CD8-positive, alpha-beta memory T cell (primary cell): ENCODE measurements at regions of chr19 and their contacts with region 1.

Region 1: GRCh38 chr19:11380653-11381534 is 3.2 kb downstream of the EPOR start:
- DNase-seq: peak; percentile 93 to 99 (median 98)
- H3K4me3 ChIP-seq: peak overlapping the region; percentile 67
- H3K4me3 Mint-ChIP-seq: peak overlapping the region; percentile 84 to 98 (median 92)
- H3K27ac ChIP-seq: peak overlapping the region; percentile 89
- H3K27ac Mint-ChIP-seq: peak overlapping the region; percentile 95 to 100 (median 98)
- H3K4me1 ChIP-seq: peaks cover 52% of the 10 kb centered on the region
- H3K4me1 Mint-ChIP-seq: peaks cover 34 to 53% (median 46%) of the 10 kb centered on the region in 3 donors
- H3K27me3 ChIP-seq: peaks cover 5% of the 10 kb centered on the region
- H3K27me3 Mint-ChIP-seq: peaks cover 13 to 15% of the 10 kb centered on the region in 2 donors

Region 2: DNA sequence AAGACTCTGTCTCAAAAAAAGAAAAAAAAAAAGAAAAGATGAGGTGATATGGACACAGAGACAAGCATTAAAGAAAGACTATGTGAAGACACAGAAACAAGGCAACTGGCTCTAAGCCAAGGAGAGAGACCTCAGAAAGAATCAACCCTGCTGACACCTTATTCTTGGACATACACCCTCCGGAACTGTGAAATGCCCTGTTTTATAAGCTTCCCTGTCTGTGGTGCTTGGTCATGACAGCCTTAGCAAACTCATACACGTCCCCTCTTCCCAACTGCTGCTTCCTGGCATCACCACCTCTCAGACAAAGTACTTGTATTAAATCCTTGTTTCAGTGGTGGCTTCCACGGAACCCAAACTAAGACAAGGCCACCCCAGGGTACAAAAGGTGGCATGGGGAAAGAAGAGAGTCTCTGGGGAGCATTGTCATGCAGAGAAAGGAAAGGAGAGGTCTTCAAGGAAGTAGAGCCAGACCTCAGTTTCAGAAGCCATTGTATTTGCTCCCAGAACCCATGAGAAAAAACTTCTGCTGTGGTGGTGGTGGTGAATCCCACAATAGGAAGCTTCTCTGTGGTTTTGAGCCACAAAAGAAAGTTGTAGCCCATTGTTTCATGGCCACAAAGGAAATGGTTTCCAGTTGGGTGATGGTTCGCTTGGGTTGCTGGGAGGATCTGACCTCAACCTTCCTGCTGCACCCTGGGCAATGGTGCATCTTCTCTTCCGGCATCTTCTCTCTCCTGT is 101.2 kb before region 1 on chr19:
- CTCF ChIA-PET with region 1: no interaction called
- POLR2A ChIA-PET with region 1: no interaction called
- DNase-seq: peak in 4 of 5 donors; percentile 30 to 69 (median 60)
- H3K4me3 ChIP-seq: peak overlapping the region; percentile 6
- H3K4me3 Mint-ChIP-seq: peak overlapping the region in 6 of 7 donors; percentile 30 to 81 (median 70)
- H3K27ac ChIP-seq: no peak overlapping the region
- H3K27ac Mint-ChIP-seq: peak overlapping the region in 6 of 8 donors; percentile 9 to 94 (median 62)
- H3K4me1 ChIP-seq: peaks cover 17% of the 10 kb centered on the region
- H3K4me1 Mint-ChIP-seq: peaks cover 10 to 21% (median 18%) of the 10 kb centered on the region in 3 donors
- H3K27me3 ChIP-seq: peaks cover 10% of the 10 kb centered on the region
- H3K27me3 Mint-ChIP-seq: peaks cover 26 to 35% of the 10 kb centered on the region in 2 donors

Region 3: GRCh38 chr19:11306334-11306733 is 74.6 kb before region 1 on chr19:
- CTCF ChIA-PET with region 1: no interaction called
- POLR2A ChIA-PET with region 1: no interaction called
- DNase-seq: no peak
- H3K4me3 ChIP-seq: no peak overlapping the region
- H3K4me3 Mint-ChIP-seq: no peak overlapping the region
- H3K27ac ChIP-seq: no peak overlapping the region
- H3K27ac Mint-ChIP-seq: no peak overlapping the region
- H3K4me1 ChIP-seq: no peaks in the 10 kb centered on the region
- H3K4me1 Mint-ChIP-seq: no peaks in the 10 kb centered on the region
- H3K27me3 ChIP-seq: no peaks in the 10 kb centered on the region
- H3K27me3 Mint-ChIP-seq: peaks cover 7 to 20% of the 10 kb centered on the region in 2 donors

Region 4: DNA sequence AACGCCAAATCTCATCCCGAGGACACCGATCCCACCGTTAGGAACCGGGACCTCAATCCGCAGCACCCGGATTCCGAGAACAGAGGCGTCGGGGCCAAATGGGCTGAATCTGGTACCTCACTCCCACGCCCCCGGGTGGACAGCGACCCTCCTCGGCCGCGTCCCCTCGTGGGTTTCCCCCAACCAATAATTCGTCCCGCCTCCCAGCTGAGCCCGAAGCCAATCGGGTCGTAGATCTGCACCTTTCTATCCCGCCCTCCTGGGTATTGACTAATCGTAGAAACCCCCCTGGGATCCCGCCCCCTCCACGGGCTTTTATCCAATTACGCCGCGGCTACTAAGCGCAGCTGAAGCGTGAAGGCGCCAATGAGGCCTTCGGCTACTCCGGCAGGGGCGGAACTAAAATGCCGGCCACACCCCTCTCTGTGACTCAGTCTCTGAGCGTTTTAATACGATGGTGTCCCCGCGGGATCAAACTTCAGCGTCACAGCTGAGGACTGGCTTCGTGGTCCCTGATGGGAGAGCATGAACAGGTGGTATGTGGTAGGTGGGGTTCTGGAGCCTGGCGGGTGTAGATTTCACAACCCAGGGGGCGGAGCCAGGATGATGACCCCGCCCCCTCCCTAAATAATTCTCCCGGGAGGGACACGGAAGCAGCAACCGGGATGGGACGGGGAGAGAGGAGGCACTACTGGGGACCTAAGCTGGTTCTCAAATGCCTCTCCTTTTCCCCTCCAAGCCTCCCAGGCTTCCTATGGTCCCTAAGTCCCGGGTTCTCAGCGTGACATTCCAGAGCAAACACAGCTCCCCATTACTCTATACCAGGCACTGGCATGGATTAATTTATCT is 34.6 kb before region 1 on chr19 and contains the starts of genes CCDC159 and TMEM205:
- CTCF ChIA-PET with region 1: interaction called, 13 read pairs
- POLR2A ChIA-PET with region 1: interaction called, 8 read pairs
- DNase-seq: peak; percentile 98 to 99 (median 98)
- H3K4me3 ChIP-seq: peak within 1 kb of the TSS; percentile 85
- H3K4me3 Mint-ChIP-seq: peak within 1 kb of the TSS; percentile 86 to 99 (median 95)
- H3K27ac ChIP-seq: peak within 1 kb of the TSS; percentile 72
- H3K27ac Mint-ChIP-seq: peak within 1 kb of the TSS; percentile 69 to 97 (median 93)
- H3K4me1 ChIP-seq: peaks cover 20% of the 10 kb centered on the region
- H3K4me1 Mint-ChIP-seq: peaks cover 23 to 31% (median 30%) of the 10 kb centered on the region in 3 donors
- H3K27me3 ChIP-seq: no peaks in the 10 kb centered on the region
- H3K27me3 Mint-ChIP-seq: peaks cover 0 to 2% of the 10 kb centered on the region in 2 donors
- total RNA-seq, gene CCDC159: 14.2 to 14.6 TPM
- total RNA-seq, gene TMEM205: 24.8 to 30.5 TPM

Region 5: DNA sequence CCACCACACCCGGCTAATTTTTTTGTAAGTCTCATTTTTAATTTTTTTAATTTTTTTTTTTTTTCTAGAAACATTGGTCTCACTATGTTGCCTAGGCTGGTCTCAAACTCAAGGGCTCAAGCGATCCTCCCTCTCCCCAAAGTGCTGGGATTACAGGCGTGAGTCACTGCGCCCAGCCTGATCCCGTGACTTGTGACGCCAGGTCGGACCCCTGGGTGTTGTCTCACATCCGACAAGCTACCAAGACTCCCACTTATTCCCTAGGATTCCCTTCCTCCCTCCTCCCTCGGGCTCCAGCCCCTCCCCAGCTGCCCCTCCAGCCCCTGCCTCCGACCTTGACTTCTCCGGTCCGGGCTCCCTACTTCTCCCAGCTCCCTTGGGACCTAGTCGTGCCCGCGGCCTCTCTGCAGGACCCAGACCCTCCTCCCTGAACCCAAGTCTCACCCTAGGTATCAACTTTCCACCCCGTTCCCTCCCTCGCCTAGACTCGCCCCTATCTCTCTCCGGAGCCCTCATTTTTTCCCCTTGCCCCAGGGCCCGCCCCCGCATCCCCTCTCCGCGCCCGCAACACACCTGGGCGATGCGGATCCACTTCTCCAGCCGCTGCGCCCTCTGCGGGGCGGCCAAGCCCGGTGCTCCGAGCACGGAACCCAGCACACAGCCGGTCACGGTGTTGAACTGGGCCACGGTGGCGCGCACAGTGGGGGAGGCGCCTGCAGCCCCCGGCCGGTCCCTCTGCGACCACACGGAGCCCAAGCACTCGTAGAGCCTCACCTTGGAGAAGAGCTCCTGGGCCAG is 25.2 kb after region 1 on chr19:
- CTCF ChIA-PET with region 1: interaction called, 21 read pairs
- POLR2A ChIA-PET with region 1: no interaction called
- DNase-seq: no peak
- H3K4me3 ChIP-seq: no peak overlapping the region
- H3K4me3 Mint-ChIP-seq: no peak overlapping the region
- H3K27ac ChIP-seq: no peak overlapping the region
- H3K27ac Mint-ChIP-seq: no peak overlapping the region
- H3K4me1 ChIP-seq: no peaks in the 10 kb centered on the region
- H3K4me1 Mint-ChIP-seq: no peaks in the 10 kb centered on the region
- H3K27me3 ChIP-seq: peaks cover 8% of the 10 kb centered on the region
- H3K27me3 Mint-ChIP-seq: peaks cover 3 to 16% of the 10 kb centered on the region in 2 donors

Region 6: GRCh38 chr19:11435058-11435832 is 54.4 kb after region 1 on chr19 and contains the starts of genes ODAD3 and PRKCSH:
- CTCF ChIA-PET with region 1: interaction called, 19 read pairs
- POLR2A ChIA-PET with region 1: interaction called, 17 read pairs
- DNase-seq: peak; percentile 93 to 99 (median 97)
- H3K4me3 ChIP-seq: peak within 1 kb of the TSS; percentile 95
- H3K4me3 Mint-ChIP-seq: peak within 1 kb of the TSS; percentile 92 to 100 (median 99)
- H3K27ac ChIP-seq: peak within 1 kb of the TSS; percentile 83
- H3K27ac Mint-ChIP-seq: peak within 1 kb of the TSS; percentile 91 to 99 (median 98)
- H3K4me1 ChIP-seq: peaks cover 19% of the 10 kb centered on the region
- H3K4me1 Mint-ChIP-seq: peaks cover 20 to 32% (median 26%) of the 10 kb centered on the region in 3 donors
- H3K27me3 ChIP-seq: no peaks in the 10 kb centered on the region
- H3K27me3 Mint-ChIP-seq: peaks cover 5 to 6% of the 10 kb centered on the region in 2 donors
- total RNA-seq, gene ODAD3: 0.11 to 0.24 TPM
- total RNA-seq, gene PRKCSH: 262 to 272 TPM